ENCODE measurements at regions of chr9 and their contacts with region 1.

Region 1: GRCh38 chr9:69168709-69169217 is 5.3 kb upstream of the TJP2 start:
- DNase-seq: peak; percentile 52
- H3K4me3 Mint-ChIP-seq: peak overlapping the region; percentile 64
- H3K27ac Mint-ChIP-seq: peak overlapping the region; percentile 80
- H3K4me1 Mint-ChIP-seq: peaks cover 39% of the 10 kb centered on the region
- H3K27me3 Mint-ChIP-seq: peaks cover 12% of the 10 kb centered on the region

Region 2: GRCh38 chr9:69180670-69181069 is 11.9 kb after region 1 on chr9:
- intact Hi-C with region 1: loop called (anchors 1 kb)
- DNase-seq: peak; percentile 47
- H3K4me3 Mint-ChIP-seq: peak overlapping the region; percentile 43
- H3K27ac Mint-ChIP-seq: peak overlapping the region; percentile 32
- H3K4me1 Mint-ChIP-seq: peaks cover 59% of the 10 kb centered on the region
- H3K27me3 Mint-ChIP-seq: peaks cover 6% of the 10 kb centered on the region

Region 3: DNA sequence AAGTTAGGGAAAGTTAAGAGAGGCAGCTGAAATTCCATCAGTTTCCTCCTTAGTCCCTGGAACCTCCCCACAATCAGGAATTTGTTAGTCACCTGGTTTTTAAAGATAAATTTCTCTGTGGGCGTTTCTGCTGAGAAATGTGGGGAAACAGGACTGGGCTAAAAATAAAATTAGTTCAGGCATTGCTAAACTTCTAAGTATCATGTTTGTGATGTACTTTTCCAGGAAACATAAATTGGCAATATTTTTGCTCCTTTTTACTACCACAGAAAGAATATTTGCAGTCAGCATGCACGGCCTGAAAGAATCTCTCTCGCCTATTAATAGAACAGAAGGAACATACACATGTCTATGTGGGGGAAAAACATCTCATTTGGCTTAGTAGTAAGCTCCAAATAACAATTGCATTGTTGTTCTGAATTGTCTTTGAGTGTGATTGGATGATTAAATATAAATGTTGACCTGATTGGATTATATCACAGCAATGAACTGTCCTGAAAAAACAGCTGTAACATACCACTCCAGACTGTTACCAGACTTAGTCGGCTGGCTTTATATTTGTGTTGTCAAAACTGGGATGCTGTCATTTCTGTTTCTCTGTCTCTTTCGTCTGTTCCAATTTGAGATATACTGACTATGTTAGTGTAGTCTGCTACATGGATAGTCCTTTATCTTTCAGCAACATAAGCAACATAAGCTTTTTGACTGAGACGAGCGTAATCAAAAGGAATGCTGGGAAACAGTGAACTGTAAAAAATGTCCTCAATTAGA is 18.3 kb after region 1 on chr9:
- intact Hi-C with region 1: loop called (anchors 2 kb)
- DNase-seq: no peak
- H3K4me3 Mint-ChIP-seq: no peak overlapping the region
- H3K27ac Mint-ChIP-seq: no peak overlapping the region
- H3K4me1 Mint-ChIP-seq: peaks cover 40% of the 10 kb centered on the region
- H3K27me3 Mint-ChIP-seq: no peaks in the 10 kb centered on the region

Region 4: GRCh38 chr9:69232135-69232534 is 63.4 kb after region 1 on chr9:
- intact Hi-C with region 1: no loop called
- DNase-seq: no peak
- H3K4me3 Mint-ChIP-seq: no peak overlapping the region
- H3K27ac Mint-ChIP-seq: no peak overlapping the region
- H3K4me1 Mint-ChIP-seq: no peaks in the 10 kb centered on the region
- H3K27me3 Mint-ChIP-seq: no peaks in the 10 kb centered on the region